Mammary epithelial cell (primary cell): ENCODE measurements at regions of chr13 and their contacts with region 1.

Region 1: GRCh38 chr13:28819735-28820098 is 422 bp upstream of the MTUS2 start:
- DNase-seq: no peak
- H3K4me3 ChIP-seq: peak overlapping the region in 1 of 3 experiments; percentile 36
- H3K27ac ChIP-seq: no peak overlapping the region
- H3K4me1 ChIP-seq: peaks cover 6% of the 10 kb centered on the region
- H3K27me3 ChIP-seq: peaks cover 11% of the 10 kb centered on the region
- CTCF ChIP-seq: peak in 1 of 2 donors; percentile 31

Region 2: GRCh38 chr13:28611654-28612131 is 208.0 kb before region 1 on chr13:
- CTCF ChIA-PET with region 1: no interaction called
- dilution Hi-C with region 1: no loop called
- in situ Hi-C with region 1: no loop called
- intact Hi-C with region 1: no loop called
- DNase-seq: no peak
- H3K4me3 ChIP-seq: no peak overlapping the region
- H3K27ac ChIP-seq: no peak overlapping the region
- H3K4me1 ChIP-seq: no peaks in the 10 kb centered on the region
- H3K27me3 ChIP-seq: no peaks in the 10 kb centered on the region
- CTCF ChIP-seq: no peak

Region 3: GRCh38 chr13:28792992-28793391 is 26.7 kb before region 1 on chr13:
- CTCF ChIA-PET with region 1: no interaction called
- dilution Hi-C with region 1: no loop called
- in situ Hi-C with region 1: no loop called
- intact Hi-C with region 1: no loop called
- DNase-seq: peak; percentile 6
- H3K4me3 ChIP-seq: no peak overlapping the region
- H3K27ac ChIP-seq: no peak overlapping the region
- H3K4me1 ChIP-seq: no peaks in the 10 kb centered on the region
- H3K27me3 ChIP-seq: no peaks in the 10 kb centered on the region
- CTCF ChIP-seq: no peak

Region 4: GRCh38 chr13:29362849-29363604 is 543.3 kb after region 1 on chr13:
- CTCF ChIA-PET with region 1: no interaction called
- dilution Hi-C with region 1: no loop called
- in situ Hi-C with region 1: loop called in 1 of 2 experiments (anchors 25 kb)
- intact Hi-C with region 1: loop called (anchors 1 kb)
- DNase-seq: peak; percentile 32
- H3K4me3 ChIP-seq: no peak overlapping the region
- H3K27ac ChIP-seq: no peak overlapping the region
- H3K4me1 ChIP-seq: no peaks in the 10 kb centered on the region
- H3K27me3 ChIP-seq: no peaks in the 10 kb centered on the region
- CTCF ChIP-seq: peak; percentile 97 to 99